ENCODE measurements at regions of chr20 and their contacts with region 1.

Region 1: DNA sequence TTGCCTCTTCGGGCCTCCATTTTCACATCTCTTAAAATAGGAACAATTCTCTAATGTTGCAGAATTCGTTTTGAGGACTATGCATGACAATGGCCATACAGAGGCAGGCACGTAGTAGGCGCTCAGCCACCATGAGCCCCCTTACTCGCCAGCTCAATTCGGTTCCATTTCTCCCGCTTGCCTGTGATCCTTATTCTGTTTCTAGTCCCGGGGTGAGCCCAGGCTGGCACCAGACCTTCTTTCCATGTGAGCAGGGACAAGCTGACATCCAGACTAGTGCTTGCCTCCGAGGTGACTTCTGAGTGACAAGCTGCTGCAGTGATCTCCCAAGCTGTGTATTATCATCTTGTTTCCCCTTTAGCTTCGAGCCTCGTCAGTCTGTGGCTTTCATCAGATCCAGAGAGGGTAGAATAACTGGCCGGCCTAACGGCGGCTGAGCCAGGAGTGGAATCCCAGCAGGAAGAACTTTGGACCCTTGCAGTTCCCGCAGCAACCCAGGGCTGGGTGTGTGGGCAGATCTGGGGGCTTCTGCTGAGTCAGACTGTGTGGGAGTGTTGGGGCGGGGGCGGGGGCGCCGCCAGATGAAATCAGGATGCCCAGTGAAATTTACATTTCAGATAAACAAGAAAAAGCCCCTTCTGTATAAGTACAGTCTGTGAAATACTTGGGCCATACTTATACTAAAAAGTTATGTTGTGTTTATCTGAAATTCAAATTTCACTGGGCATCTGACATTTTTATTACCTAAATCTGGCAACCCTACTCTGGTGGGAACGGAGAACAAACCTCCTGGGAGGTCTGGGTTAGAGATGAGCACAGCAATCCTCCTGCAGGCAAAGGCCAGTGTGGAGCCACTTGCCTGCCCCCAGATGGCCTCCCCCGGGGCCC is 10.9 kb downstream of the BANF2 start:
- DNase-seq: peak; percentile 92
- ATAC-seq: peak; percentile 93
- H3K4me3 ChIP-seq: peak overlapping the region; percentile 36 to 70 (median 54)
- H3K27ac ChIP-seq: peak overlapping the region; percentile 43
- H3K4me1 ChIP-seq: peaks cover 75% of the 10 kb centered on the region
- H3K27me3 ChIP-seq: peaks cover 2 to 23% of the 10 kb centered on the region in 2 experiments; a peak in 2 of 5 replicates
- CTCF ChIP-seq: 0 out of 2 replicates have a peak, but pooled peaks have one; percentile 6
- EP300 ChIP-seq: peak in 1 of 2 experiments; percentile 66; a peak in 2 of 4 replicates
- POLR2A ChIP-seq: peak; percentile 59 to 61; a peak in 3 of 4 replicates
- RAD21 ChIP-seq: peak; percentile 31; the same call in 1 of the 2 replicates

Region 2: DNA sequence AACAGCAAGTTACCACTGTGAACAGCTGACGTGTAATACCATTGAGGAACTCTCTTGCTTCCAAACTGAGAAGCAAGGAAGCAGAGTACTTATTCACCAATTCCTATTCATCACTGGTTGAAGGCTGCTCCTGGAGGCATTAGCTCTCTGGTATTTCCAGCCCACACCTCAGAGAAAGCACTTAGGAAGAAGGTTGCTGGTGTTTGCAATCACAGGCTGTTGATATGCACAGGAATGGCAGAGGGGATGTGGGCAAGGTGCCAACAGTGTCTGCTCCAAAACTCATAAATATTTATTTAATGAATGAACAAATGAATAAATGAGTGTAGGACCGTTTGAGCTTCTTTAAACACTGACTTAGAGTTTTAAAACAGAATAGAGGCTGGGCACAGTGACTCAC is 21.7 kb before region 1 on chr20:
- CTCF ChIA-PET with region 1: no interaction called
- POLR2A ChIA-PET with region 1: interaction called, 126 read pairs
- in situ Hi-C with region 1: no loop called
- intact Hi-C with region 1: loop called (anchors 1 kb)
- DNase-seq: no peak
- ATAC-seq: no peak
- H3K4me3 ChIP-seq: no peak overlapping the region
- H3K27ac ChIP-seq: no peak overlapping the region
- H3K4me1 ChIP-seq: peaks cover 14% of the 10 kb centered on the region
- H3K27me3 ChIP-seq: peaks cover 2 to 66% of the 10 kb centered on the region in 2 experiments; a peak in 4 of 5 replicates
- CTCF ChIP-seq: no peak
- EP300 ChIP-seq: no peak
- POLR2A ChIP-seq: no peak
- RAD21 ChIP-seq: no peak

Region 3: DNA sequence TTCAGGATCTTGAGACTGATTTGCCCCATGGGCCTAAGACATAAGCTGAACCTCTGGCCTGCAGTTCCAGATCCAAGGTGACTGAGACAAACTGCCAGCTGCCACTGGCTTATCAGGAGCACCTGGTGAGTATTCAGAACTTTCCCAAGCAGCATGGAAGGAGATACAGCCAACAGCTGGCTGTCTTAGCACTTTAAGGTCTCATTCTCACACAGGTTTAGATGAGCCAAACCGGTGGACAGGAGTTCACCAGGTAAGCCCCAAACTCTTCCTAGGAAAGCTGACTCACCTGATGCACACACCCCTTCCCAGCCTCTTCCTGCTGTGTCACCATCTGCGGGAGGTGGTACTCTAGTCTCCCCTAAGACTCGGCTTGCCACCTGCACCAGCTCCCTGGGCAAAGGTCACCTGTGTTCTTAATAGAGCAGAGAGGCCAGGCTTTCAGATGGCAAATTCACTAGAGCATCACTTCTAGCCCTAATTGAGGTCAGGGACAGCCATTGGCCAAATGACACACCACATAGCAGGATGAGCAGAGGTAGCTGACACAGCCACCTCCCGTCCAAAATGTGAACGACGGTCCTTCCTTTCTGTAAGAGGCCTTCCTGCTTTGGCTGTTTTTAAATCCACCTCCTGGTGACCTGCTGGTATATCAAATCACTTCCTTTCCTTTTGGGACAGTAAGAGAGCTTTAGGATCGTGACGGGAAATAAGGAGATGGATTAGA is 10.5 kb before region 1 on chr20 and contains the start of gene BANF2:
- CTCF ChIA-PET with region 1: no interaction called
- POLR2A ChIA-PET with region 1: interaction called, 12 read pairs
- in situ Hi-C with region 1: no loop called
- intact Hi-C with region 1: no loop called
- DNase-seq: no peak
- ATAC-seq: peak; percentile 24; the same call in 1 of the 3 replicates
- H3K4me3 ChIP-seq: no peak within 1 kb of the TSS
- H3K27ac ChIP-seq: no peak within 1 kb of the TSS
- H3K4me1 ChIP-seq: peaks cover 20% of the 10 kb centered on the region
- H3K27me3 ChIP-seq: peaks cover 14 to 64% of the 10 kb centered on the region in 2 experiments
- CTCF ChIP-seq: 0 out of 2 replicates have a peak, but pooled peaks have one; percentile 9
- EP300 ChIP-seq: no peak
- POLR2A ChIP-seq: no peak
- RAD21 ChIP-seq: no peak
- total RNA-seq, gene BANF2: 0.35 TPM in 1 of 2 replicates, not detected in the other

Region 4: DNA sequence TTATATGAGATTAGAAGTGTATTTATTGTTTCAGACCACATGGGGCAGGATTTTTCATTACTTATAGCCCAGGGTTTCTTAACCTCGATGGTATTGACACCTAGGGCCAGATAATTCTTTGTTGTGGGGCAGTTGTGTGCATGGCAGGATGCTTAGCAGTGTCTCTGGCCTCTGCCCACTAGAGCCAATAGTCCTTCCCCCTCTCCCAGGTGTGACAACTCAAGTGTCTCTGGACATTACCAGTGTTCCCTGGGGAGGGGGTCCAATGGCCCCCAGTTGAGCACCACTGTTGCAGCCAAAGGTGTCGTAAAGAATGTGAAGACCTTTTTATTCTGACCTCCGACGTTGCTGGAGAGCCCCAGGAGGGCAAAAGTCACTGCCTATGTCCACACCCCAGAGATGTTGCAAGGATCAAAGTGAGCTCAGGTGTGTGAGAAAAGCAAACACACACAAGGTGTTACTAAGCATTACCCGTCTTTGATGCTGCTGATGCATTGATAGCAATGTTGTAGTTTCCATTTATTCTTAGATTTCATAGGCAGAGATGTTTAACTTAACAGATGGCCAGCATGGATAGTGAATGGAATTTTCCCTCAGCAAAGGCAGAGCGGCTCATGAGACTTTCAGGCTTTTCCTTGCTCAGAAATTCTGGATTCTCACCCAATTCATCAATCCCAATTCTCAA is 11.3 kb after region 1 on chr20:
- CTCF ChIA-PET with region 1: interaction called, 4 read pairs
- POLR2A ChIA-PET with region 1: interaction called, 21 read pairs
- in situ Hi-C with region 1: no loop called
- intact Hi-C with region 1: loop called (anchors 1 kb)
- DNase-seq: peak; percentile 99
- ATAC-seq: peak; percentile 91
- H3K4me3 ChIP-seq: peak overlapping the region in 1 of 3 experiments; percentile 8; a peak in 2 of 6 replicates
- H3K27ac ChIP-seq: peak overlapping the region; percentile 55
- H3K4me1 ChIP-seq: peaks cover 44% of the 10 kb centered on the region
- H3K27me3 ChIP-seq: peaks cover 4 to 65% of the 10 kb centered on the region in 2 experiments; a peak in 4 of 5 replicates
- CTCF ChIP-seq: peak; percentile 35; the same call in 1 of the 2 replicates
- EP300 ChIP-seq: peak; percentile 99; a peak in 3 of 4 replicates
- POLR2A ChIP-seq: no peak
- RAD21 ChIP-seq: peak; percentile 59; the same call in 1 of the 2 replicates